Caco-2 (cell line): ENCODE measurements at regions of chr1 and their contacts with region 1.

Region 1: DNA sequence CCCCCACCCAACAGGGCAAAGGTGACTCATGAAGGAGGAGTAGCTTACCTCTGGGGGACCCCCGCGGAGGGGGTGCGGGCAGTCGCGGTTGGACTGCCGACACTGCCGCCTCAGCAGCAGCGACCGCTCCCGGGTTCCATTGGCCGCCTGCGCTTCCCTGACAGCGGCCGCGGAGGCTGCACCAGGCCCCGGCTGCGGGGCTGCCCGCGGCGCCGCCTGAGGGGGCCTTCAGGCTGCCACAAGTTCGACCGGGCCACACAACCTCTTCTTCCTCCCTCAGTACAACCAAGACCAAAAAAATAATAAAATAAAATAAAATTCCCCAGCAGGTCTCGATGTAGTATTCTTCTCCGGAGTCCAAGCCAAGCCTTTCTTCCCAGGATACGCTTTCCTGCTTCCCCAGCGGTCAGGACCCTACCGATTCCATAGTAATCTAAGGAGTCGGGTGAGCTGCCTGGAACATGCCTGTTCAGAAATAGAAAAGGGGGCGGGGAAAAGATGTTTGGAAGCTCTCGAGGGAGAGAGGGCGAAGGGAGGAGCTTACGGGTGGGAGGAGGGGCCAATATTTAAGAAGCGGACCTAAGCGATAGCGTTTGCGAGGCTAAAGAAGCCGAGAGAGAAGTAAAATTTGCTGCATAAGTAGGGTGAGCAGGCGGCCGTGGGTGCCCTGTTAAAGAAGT is at the start of gene PI4KB:
- DNase-seq: peak; percentile 97 to 98
- H3K4me3 ChIP-seq: peak within 1 kb of the TSS; percentile 75
- H3K4me3 Mint-ChIP-seq: peak within 1 kb of the TSS; percentile 98
- H3K27ac Mint-ChIP-seq: peak within 1 kb of the TSS; percentile 95
- H3K4me1 ChIP-seq: peaks cover 11% of the 10 kb centered on the region
- H3K4me1 Mint-ChIP-seq: peaks cover 25% of the 10 kb centered on the region
- H3K27me3 ChIP-seq: no peaks in the 10 kb centered on the region
- H3K27me3 Mint-ChIP-seq: no peaks in the 10 kb centered on the region
- CTCF ChIP-seq: no peak
- total RNA-seq, gene PI4KB: 49.7 and 52.7 TPM in 2 replicates

Region 2: GRCh38 chr1:151294742-151295462 is 32.5 kb before region 1 on chr1:
- CTCF ChIA-PET with region 1: interaction called, 15 read pairs
- POLR2A ChIA-PET with region 1: no interaction called
- intact Hi-C with region 1: no loop called
- DNase-seq: no peak
- H3K4me3 ChIP-seq: no peak overlapping the region
- H3K4me3 Mint-ChIP-seq: no peak overlapping the region
- H3K27ac Mint-ChIP-seq: no peak overlapping the region
- H3K4me1 ChIP-seq: no peaks in the 10 kb centered on the region
- H3K4me1 Mint-ChIP-seq: no peaks in the 10 kb centered on the region
- H3K27me3 ChIP-seq: no peaks in the 10 kb centered on the region
- H3K27me3 Mint-ChIP-seq: no peaks in the 10 kb centered on the region
- CTCF ChIP-seq: no peak

Region 3: DNA sequence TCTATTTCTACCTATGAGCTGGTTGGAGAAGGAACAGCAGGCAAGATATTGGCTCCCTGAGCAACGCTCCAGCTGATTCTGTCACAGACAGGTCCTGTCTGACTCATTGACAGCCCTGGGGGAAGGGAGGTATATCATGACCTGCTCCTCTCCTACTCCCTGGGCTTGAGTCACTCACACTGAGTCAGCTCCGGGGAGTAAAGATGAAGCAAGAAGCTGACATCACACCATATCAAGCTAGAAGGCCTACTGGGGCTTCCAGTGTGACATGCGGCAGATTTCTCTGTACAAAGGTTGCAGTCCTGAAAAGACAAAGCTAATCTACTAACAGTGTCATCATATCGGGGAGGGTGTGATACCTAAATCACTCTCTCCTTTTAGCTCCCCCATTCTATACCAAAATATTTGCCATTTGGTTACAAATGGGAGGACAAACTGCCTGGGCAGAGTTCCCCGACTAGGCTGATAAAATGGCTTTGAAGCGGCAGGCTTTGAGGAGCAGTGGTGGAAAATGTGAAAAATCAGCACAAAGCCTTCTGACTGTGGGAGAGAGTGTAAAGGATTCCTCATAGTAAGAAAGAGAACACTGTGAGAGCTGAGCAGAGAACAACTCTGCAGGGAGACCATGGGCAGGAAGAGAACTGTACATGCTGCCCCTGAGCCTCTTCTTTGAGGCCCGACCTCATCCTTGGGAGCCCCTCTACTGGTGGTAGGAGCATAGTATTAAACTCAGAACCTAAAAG is 15.6 kb before region 1 on chr1:
- CTCF ChIA-PET with region 1: interaction called, 4 read pairs
- POLR2A ChIA-PET with region 1: interaction called, 10 read pairs
- intact Hi-C with region 1: loop called (anchors 1 kb)
- DNase-seq: peak; percentile 83 to 89
- H3K4me3 ChIP-seq: no peak overlapping the region
- H3K4me3 Mint-ChIP-seq: no peak overlapping the region
- H3K27ac Mint-ChIP-seq: peak overlapping the region; percentile 78
- H3K4me1 ChIP-seq: peaks cover 67% of the 10 kb centered on the region
- H3K4me1 Mint-ChIP-seq: peaks cover 43% of the 10 kb centered on the region
- H3K27me3 ChIP-seq: no peaks in the 10 kb centered on the region
- H3K27me3 Mint-ChIP-seq: no peaks in the 10 kb centered on the region
- CTCF ChIP-seq: no peak